Endothelial cell of umbilical vein (primary cell): ENCODE measurements at regions of chr3 and their contacts with region 1.

Region 1: DNA sequence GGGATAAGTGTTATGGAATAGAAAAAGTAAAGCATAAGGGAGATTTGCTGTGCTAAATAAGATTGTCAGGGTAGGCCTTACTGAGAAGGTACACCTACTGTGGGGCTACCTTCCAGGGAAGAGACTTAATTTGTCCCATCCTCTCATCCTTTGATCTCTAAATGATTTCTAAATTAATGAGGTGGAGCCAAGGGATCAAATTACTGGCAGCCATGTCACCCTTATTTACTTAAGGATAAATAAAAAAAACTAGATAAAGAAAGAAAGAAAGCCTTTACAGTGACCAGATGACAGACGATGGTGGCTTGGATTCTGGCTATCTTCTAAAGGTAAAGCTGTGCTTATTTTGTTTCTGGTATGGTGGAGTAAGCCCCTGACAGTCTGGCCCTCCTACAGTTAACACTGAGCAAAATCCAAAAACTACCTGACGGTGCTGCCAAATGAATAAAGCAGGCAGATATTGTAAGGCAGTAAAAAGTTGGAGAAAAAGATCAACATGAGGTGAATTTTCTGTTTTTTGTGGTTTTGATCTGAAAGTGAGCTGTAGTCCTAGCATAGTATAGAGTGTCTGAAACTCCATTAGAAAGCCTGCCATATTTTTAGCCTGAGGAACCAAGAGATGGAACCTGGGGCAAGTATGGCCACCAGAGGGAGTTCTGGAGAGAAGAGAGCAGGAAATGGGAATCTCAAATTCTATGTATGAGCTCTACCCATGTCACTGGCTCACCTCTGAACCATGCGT is 285.1 kb upstream of the MANF start:
- DNase-seq: peak; percentile 50
- H3K4me3 ChIP-seq: no peak overlapping the region
- H3K27ac ChIP-seq: no peak overlapping the region
- H3K4me1 ChIP-seq: no peaks in the 10 kb centered on the region
- H3K27me3 ChIP-seq: no peaks in the 10 kb centered on the region
- CTCF ChIP-seq: peak; percentile 64 to 72
- POLR2A ChIP-seq: no peak

Region 2: GRCh38 chr3:50671331-50671730 is 428.6 kb before region 1 on chr3:
- CTCF ChIA-PET with region 1: no interaction called
- POLR2A ChIA-PET with region 1: no interaction called
- dilution Hi-C with region 1: no loop called
- intact Hi-C with region 1: no loop called
- DNase-seq: peak; percentile 43
- H3K4me3 ChIP-seq: no peak overlapping the region
- H3K27ac ChIP-seq: no peak overlapping the region
- H3K4me1 ChIP-seq: peaks cover 5% of the 10 kb centered on the region
- H3K27me3 ChIP-seq: peaks cover 52 to 60% of the 10 kb centered on the region in 2 experiments
- CTCF ChIP-seq: no peak
- POLR2A ChIP-seq: no peak

Region 3: GRCh38 chr3:51245867-51246266 is 145.9 kb after region 1 on chr3:
- CTCF ChIA-PET with region 1: no interaction called
- POLR2A ChIA-PET with region 1: no interaction called
- dilution Hi-C with region 1: no loop called
- intact Hi-C with region 1: no loop called
- DNase-seq: no peak
- H3K4me3 ChIP-seq: no peak overlapping the region
- H3K27ac ChIP-seq: no peak overlapping the region
- H3K4me1 ChIP-seq: no peaks in the 10 kb centered on the region
- H3K27me3 ChIP-seq: no peaks in the 10 kb centered on the region
- CTCF ChIP-seq: no peak
- POLR2A ChIP-seq: no peak

Region 4: GRCh38 chr3:51311055-51311454 is 211.1 kb after region 1 on chr3:
- CTCF ChIA-PET with region 1: interaction called, 11 read pairs
- POLR2A ChIA-PET with region 1: no interaction called
- dilution Hi-C with region 1: no loop called
- intact Hi-C with region 1: no loop called
- DNase-seq: peak; percentile 31
- H3K4me3 ChIP-seq: no peak overlapping the region
- H3K27ac ChIP-seq: no peak overlapping the region
- H3K4me1 ChIP-seq: no peaks in the 10 kb centered on the region
- H3K27me3 ChIP-seq: no peaks in the 10 kb centered on the region
- CTCF ChIP-seq: peak in 1 of 2 donors; percentile 32
- POLR2A ChIP-seq: no peak

Region 5: GRCh38 chr3:51340013-51340856 is 240.3 kb after region 1 on chr3:
- CTCF ChIA-PET with region 1: interaction called, 13 read pairs
- POLR2A ChIA-PET with region 1: no interaction called
- dilution Hi-C with region 1: no loop called
- intact Hi-C with region 1: no loop called
- DNase-seq: peak; percentile 89
- H3K4me3 ChIP-seq: no peak overlapping the region
- H3K27ac ChIP-seq: peak overlapping the region; percentile 84
- H3K4me1 ChIP-seq: peaks cover 15% of the 10 kb centered on the region
- H3K27me3 ChIP-seq: peaks cover under 1 to 3% of the 10 kb centered on the region in 2 experiments
- CTCF ChIP-seq: no peak
- POLR2A ChIP-seq: no peak

Region 6: GRCh38 chr3:51362476-51362875 is 262.5 kb after region 1 on chr3:
- CTCF ChIA-PET with region 1: interaction called, 11 read pairs
- POLR2A ChIA-PET with region 1: no interaction called
- dilution Hi-C with region 1: no loop called
- intact Hi-C with region 1: no loop called
- DNase-seq: no peak
- H3K4me3 ChIP-seq: no peak overlapping the region
- H3K27ac ChIP-seq: no peak overlapping the region
- H3K4me1 ChIP-seq: no peaks in the 10 kb centered on the region
- H3K27me3 ChIP-seq: no peaks in the 10 kb centered on the region
- CTCF ChIP-seq: no peak
- POLR2A ChIP-seq: no peak

Region 7: DNA sequence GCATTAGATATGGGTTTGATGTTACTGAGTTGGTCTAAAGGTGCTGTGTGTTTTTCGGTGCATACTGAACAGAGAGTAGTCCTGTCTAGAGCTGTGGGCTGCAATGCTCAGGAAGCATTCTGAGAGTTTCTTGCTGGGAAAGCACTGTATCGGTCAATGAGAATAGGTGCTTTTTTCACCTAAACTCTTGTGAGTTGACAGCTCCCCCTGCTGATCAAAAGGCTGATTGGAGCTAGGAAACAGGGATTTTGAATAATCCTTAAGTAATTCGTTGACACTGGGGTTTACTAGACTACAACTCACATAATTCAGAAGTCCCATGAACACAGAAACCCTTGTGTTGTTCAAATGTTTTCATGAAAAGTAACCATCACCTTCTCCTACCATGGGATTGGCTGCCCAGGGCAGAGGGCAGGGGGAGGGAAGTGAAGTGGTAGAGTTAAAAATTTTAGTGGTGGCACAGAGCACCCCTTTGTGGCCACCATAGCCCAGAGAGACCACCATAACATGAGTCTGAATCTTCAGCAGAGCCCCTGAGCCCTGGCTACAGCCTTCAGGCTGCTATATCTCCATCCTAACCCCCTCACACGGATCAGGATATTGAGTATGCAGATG is 272.1 kb after region 1 on chr3:
- CTCF ChIA-PET with region 1: interaction called, 224 read pairs
- POLR2A ChIA-PET with region 1: no interaction called
- dilution Hi-C with region 1: no loop called
- intact Hi-C with region 1: no loop called
- DNase-seq: peak; percentile 71
- H3K4me3 ChIP-seq: no peak overlapping the region
- H3K27ac ChIP-seq: no peak overlapping the region
- H3K4me1 ChIP-seq: no peaks in the 10 kb centered on the region
- H3K27me3 ChIP-seq: no peaks in the 10 kb centered on the region
- CTCF ChIP-seq: peak; percentile 60 to 63
- POLR2A ChIP-seq: no peak

Region 8: GRCh38 chr3:51379301-51379700 is 279.3 kb after region 1 on chr3:
- CTCF ChIA-PET with region 1: interaction called, 224 read pairs
- POLR2A ChIA-PET with region 1: no interaction called
- dilution Hi-C with region 1: no loop called
- intact Hi-C with region 1: no loop called
- DNase-seq: no peak
- H3K4me3 ChIP-seq: no peak overlapping the region
- H3K27ac ChIP-seq: no peak overlapping the region
- H3K4me1 ChIP-seq: peaks cover 6% of the 10 kb centered on the region
- H3K27me3 ChIP-seq: no peaks in the 10 kb centered on the region
- CTCF ChIP-seq: no peak
- POLR2A ChIP-seq: no peak

Region 9: DNA sequence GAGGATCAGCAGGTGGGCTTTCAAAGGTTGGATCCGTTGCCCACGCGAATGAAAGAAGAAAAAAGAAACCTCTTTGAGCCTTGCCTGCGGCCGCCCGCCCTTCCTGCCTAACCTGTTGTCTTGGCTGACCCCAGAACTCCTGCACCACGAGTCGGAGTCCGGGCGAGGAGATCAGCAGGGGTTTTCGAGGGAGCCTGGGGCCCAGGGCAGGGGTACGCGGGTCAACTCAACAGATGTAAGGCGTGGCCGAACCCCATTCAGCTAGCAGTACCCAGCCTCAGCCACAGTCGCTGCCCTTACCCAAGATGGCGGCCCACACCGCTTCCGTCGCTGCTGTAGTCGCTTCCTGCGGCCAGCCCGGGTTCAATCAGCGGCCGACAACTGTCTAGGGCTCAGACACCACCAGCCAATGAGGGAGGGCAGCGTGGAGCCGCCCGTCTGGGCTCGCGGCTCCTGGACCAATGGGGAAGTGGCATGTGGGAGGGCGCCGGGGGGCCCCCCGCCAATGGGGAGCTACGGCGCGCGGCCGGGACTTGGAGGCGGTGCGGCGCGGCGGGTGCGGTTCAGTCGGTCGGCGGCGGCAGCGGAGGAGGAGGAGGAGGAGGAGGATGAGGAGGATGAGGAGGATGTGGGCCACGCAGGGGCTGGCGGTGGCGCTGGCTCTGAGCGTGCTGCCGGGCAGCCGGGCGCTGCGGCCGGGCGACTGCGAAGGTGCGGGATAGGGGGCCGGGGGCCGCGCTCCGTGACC is 284.9 kb after region 1 on chr3 and contains the start of gene MANF:
- CTCF ChIA-PET with region 1: interaction called, 27 read pairs
- POLR2A ChIA-PET with region 1: no interaction called
- dilution Hi-C with region 1: no loop called
- intact Hi-C with region 1: no loop called
- DNase-seq: peak; percentile 99
- H3K4me3 ChIP-seq: peak within 1 kb of the TSS; percentile 64 to 97 (median 93)
- H3K27ac ChIP-seq: peak within 1 kb of the TSS; percentile 95
- H3K4me1 ChIP-seq: peaks cover 29% of the 10 kb centered on the region
- H3K27me3 ChIP-seq: no peaks in the 10 kb centered on the region
- CTCF ChIP-seq: no peak
- POLR2A ChIP-seq: peak; percentile 89
- total RNA-seq, gene MANF: 248 and 254 TPM in 2 replicates